Dorsolateral prefrontal cortex (tissue), 120 donors: ENCODE measurements at regions of chr12 and their contacts with region 1.

Region 1: GRCh38 chr12:27523642-27524493 is at the start of gene PPFIBP1:
- DNase-seq: peak; percentile 91 to 100 (median 99)
- H3K4me3 ChIP-seq: peak within 1 kb of the TSS; percentile 65 to 95 (median 84)
- H3K27ac ChIP-seq: peak within 1 kb of the TSS; percentile 39 to 95 (median 89)
- H3K27me3 ChIP-seq: no peaks in the 10 kb centered on the region
- CTCF ChIP-seq: peak in 6 of 56 donors; percentile 7 to 27 (median 18)
- total RNA-seq, gene PPFIBP1: 105 to 192 (median 143) TPM

Region 2: DNA sequence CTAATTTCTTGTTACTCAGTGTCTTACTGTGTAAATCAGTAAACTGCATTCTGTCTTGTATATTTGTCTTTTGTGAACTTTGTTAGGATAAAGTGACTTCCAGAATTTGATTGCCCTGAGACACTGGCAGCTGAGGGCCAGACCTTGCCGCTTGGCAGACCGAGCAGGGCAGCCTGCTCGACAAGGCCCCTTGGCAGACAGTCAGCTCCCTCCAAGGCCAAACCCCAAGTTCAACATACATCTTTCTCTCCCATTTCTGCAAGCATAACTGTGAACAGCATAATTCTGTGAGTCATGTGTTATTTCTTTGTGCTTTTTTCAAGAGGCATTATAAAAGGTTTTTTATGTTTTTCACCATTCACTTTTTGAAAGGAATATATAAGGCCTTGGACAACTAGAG is 230.4 kb before region 1 on chr12:
- intact Hi-C with region 1: no loop called
- DNase-seq: no peak
- H3K4me3 ChIP-seq: no peak overlapping the region
- H3K27ac ChIP-seq: no peak overlapping the region
- H3K27me3 ChIP-seq: no peaks in the 10 kb centered on the region
- CTCF ChIP-seq: no peak

Region 3: GRCh38 chr12:27383429-27384260 is 140.2 kb before region 1 on chr12:
- intact Hi-C with region 1: no loop called
- DNase-seq: peak in 8 of 10 donors; percentile 29 to 60 (median 50)
- H3K4me3 ChIP-seq: no peak overlapping the region
- H3K27ac ChIP-seq: no peak overlapping the region
- H3K27me3 ChIP-seq: no peaks in the 10 kb centered on the region
- CTCF ChIP-seq: peak; percentile 51 to 80 (median 71)

Region 4: GRCh38 chr12:27554421-27555186 is 30.7 kb after region 1 on chr12:
- intact Hi-C with region 1: loop called in 1 of 2 experiments (anchors 5 kb)
- DNase-seq: peak in 8 of 10 donors; percentile 52 to 70 (median 60)
- H3K4me3 ChIP-seq: peak overlapping the region in 57 of 59 donors; percentile 1 to 62 (median 34)
- H3K27ac ChIP-seq: peak overlapping the region; percentile 67 to 100 (median 96)
- H3K27me3 ChIP-seq: no peaks in the 10 kb centered on the region
- CTCF ChIP-seq: no peak

Region 5: DNA sequence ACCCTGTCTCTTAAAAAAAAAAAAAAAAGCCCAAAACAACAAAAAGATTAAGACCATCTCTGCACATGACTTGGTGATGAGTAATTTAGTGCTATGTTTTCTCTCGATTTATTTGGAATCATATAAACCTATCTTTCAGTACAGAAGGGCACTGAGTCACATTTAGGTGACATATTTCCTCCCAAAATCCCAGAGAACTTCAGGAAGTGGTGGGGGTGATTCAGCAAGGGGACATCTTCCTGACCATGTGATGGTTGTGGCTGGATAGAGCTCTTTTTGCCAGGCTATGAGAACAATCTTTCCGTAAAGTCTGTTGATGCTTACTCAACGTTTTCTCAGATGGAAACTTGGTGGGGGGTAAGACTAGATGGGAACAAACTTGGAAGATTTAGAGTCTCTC is 50.1 kb after region 1 on chr12:
- intact Hi-C with region 1: no loop called
- DNase-seq: no peak
- H3K4me3 ChIP-seq: no peak overlapping the region
- H3K27ac ChIP-seq: peak overlapping the region in 11 of 59 donors; percentile 6 to 57 (median 24)
- H3K27me3 ChIP-seq: no peaks in the 10 kb centered on the region
- CTCF ChIP-seq: no peak

Region 6: GRCh38 chr12:27635349-27635972 is 111.6 kb after region 1 on chr12:
- intact Hi-C with region 1: loop called in 1 of 2 experiments (anchors 2 kb)
- DNase-seq: no peak
- H3K4me3 ChIP-seq: no peak overlapping the region
- H3K27ac ChIP-seq: peak overlapping the region in 12 of 59 donors; percentile 7 to 51 (median 16)
- H3K27me3 ChIP-seq: no peaks in the 10 kb centered on the region
- CTCF ChIP-seq: peak; percentile 54 to 88 (median 76)

Region 7: DNA sequence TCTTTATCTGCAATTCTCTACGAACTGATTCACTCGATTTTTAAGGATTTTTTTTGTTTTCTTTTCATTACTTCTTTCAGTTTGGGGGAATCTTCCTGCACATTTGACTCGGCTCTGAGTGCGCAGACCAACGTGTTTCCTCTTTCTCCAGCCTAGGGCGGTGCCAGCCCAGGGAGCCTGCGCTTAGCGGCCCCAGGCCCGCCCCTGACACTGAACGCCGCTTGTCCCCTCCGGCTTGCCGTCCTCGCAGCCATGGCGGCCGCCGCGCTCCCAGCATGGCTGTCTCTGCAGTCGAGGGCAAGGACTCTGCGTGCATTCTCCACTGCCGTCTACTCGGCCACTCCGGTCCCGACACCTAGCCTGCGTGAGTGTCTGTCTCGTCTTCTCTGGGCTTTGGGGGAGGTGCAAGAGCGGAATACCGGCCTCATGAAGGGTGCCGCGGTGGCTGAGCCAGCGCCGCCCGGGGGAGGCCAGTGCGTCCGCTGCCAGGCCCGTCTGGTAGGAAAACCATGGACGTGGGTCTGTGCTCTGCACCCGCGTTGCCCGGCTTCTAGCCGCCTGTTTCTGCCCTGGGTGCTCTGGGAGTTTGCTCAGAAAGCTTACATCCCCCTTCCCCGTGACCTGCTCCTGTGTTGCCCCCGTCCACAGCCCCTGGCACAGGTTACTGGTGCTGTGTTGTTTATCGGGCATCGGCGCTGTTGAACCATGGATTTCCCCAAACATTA is 186.9 kb after region 1 on chr12 and contains the start of gene MRPS35:
- intact Hi-C with region 1: loop called in 1 of 2 experiments (anchors 5 kb)
- DNase-seq: peak; percentile 84 to 94 (median 86)
- H3K4me3 ChIP-seq: peak within 1 kb of the TSS; percentile 62 to 100 (median 92)
- H3K27ac ChIP-seq: peak within 1 kb of the TSS; percentile 16 to 92 (median 79)
- H3K27me3 ChIP-seq: no peaks in the 10 kb centered on the region
- CTCF ChIP-seq: peak in 36 of 56 donors; percentile 10 to 65 (median 34)
- total RNA-seq, gene MRPS35: 35.5 to 83.3 (median 51.5) TPM

Region 8: DNA sequence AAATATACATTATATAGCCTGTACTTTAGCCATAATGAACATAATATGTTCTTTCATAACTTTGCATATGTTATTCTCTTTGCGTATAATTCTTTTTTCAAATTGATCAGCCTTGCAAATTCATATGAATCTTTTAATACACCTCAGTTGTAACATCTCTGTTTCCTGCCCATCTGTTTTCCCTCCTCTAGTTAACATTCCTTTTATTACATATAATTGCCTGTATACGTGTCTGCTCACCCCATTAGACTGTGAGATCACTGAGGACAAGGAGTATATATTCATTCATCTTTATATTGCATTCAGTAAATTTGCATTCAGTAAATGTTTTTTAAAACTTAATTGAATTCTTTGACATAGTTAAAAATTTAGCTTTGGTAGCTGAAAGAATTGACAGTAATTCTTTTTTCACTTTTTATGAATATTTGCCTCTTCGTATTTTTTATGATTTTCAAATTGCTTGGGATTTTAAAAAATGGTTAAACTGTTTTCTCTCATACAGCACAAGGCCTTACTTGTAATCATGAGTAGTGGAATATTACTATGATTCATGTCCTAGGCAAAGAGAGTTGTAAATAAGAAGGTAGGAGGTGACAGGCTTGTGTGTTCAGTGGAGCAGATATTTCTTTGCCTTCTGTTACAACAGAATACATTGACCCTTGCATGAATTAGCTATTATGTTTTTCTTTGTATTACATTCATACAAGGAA is 223.4 kb after region 1 on chr12:
- intact Hi-C with region 1: no loop called
- DNase-seq: no peak
- H3K4me3 ChIP-seq: no peak overlapping the region
- H3K27ac ChIP-seq: peak overlapping the region in 7 of 59 donors; percentile 0 to 68 (median 29)
- H3K27me3 ChIP-seq: no peaks in the 10 kb centered on the region
- CTCF ChIP-seq: no peak